ENCODE measurements at regions of chr22 and their contacts with region 1.

Region 1: DNA sequence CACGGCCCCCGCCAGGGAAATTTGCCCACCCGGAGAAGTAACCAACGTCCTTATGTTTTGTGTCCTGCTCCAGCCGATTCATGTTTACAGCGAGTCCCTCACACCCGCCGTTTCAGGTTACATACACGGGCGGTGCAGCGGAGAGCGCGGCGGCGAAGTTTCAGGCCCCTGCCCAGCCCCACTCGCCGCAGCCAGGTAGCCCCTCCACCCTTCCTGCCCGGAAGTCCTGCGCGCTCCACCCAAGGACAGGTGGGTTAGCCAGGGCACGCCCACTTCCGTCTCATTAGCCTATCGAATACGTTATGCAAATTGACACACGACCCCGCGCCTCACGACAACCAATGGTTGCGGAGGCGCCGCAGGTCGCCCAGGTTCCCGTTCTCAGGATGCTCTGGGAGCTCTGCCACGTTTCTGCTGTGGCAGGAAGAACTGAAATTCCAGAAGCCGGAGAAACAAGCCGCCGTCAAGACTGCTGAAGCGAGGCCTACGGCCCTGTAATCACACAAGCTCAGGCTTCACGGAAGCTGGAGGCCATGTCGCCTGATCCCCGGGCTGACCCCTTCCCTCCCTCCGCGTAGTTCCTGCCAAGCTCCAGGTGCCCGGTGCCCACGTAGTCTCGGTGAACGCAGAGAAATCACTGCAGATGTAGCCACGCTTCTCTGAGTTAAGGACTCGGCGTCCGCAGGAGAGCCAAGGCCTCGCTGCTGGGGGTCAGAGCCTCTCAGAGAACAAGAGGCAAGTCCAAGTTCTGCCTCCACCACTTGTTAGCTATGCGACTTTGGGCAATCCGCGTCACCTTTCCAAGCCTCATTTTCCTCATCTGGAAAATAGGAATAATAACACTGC is 22.4 kb upstream of the MYH9 start:
- DNase-seq: no peak
- ATAC-seq: peak; percentile 85
- H3K4me3 ChIP-seq: peak overlapping the region; percentile 12 to 43
- H3K27ac ChIP-seq: peak overlapping the region; percentile 24
- H3K4me1 ChIP-seq: peaks cover 9% of the 10 kb centered on the region; the same call in 1 of the 2 replicates
- H3K27me3 ChIP-seq: no peaks in the 10 kb centered on the region
- CTCF ChIP-seq: no peak

Region 2: GRCh38 chr22:36201630-36202319 is 208.4 kb before region 1 on chr22 and contains the start of gene APOL4:
- CTCF ChIA-PET with region 1: no interaction called
- POLR2A ChIA-PET with region 1: interaction called, 11 read pairs
- in situ Hi-C with region 1: no loop called
- intact Hi-C with region 1: no loop called
- DNase-seq: no peak
- ATAC-seq: no peak
- H3K4me3 ChIP-seq: no peak within 1 kb of the TSS
- H3K27ac ChIP-seq: no peak within 1 kb of the TSS
- H3K4me1 ChIP-seq: no peaks in the 10 kb centered on the region
- H3K27me3 ChIP-seq: no peaks in the 10 kb centered on the region
- CTCF ChIP-seq: no peak
- total RNA-seq, gene APOL4: not detected

Region 3: DNA sequence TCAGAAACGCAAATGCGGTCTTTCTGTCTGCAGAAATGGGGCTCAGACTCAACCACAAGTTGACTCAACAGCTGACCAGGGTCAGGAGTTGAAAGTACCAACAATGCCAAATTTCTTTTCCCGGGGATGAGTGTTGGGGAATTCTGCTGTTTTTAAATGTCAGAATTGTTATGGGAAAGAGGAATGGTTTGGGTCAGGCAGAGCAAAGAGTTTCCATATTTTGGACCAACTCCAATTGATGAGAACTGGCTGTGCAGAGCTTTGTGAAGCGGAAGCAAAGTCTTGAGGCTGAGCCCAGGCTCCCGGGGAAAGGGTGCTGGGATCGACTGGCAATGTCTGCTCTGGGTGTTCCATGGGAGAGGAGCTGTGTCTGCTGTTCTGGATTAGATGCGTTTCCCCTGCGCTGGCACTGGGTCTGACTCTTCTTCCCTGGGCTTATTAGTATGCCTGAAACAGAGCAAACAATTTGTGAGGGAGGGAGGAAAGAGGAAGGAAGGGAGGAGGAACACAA is 35.1 kb after region 1 on chr22:
- CTCF ChIA-PET with region 1: no interaction called
- POLR2A ChIA-PET with region 1: no interaction called
- in situ Hi-C with region 1: no loop called
- intact Hi-C with region 1: no loop called
- DNase-seq: no peak
- ATAC-seq: no peak
- H3K4me3 ChIP-seq: no peak overlapping the region
- H3K27ac ChIP-seq: peak overlapping the region; percentile 1; the same call in 1 of the 2 replicates
- H3K4me1 ChIP-seq: peaks cover 3% of the 10 kb centered on the region
- H3K27me3 ChIP-seq: no peaks in the 10 kb centered on the region
- CTCF ChIP-seq: no peak